Activated naive CD4-positive, alpha-beta T cell treated with anti-CD3 and anti-CD28 coated beads for 36 hours (primary cell): ENCODE measurements at regions of chr17 and their contacts with region 1.

Region 1: GRCh38 chr17:75749545-75750389 is 15.2 kb downstream of the GALK1 start:
- DNase-seq: peak; percentile 92
- H3K4me3 Mint-ChIP-seq: no peak overlapping the region
- H3K27ac Mint-ChIP-seq: peak overlapping the region; percentile 18
- H3K4me1 Mint-ChIP-seq: peaks cover 14% of the 10 kb centered on the region
- H3K27me3 Mint-ChIP-seq: no peaks in the 10 kb centered on the region

Region 2: GRCh38 chr17:75515496-75516254 is 234.1 kb before region 1 on chr17 and contains the start of gene CASKIN2:
- CTCF ChIA-PET with region 1: no interaction called
- intact Hi-C with region 1: loop called (anchors 5 kb)
- DNase-seq: peak; percentile 90
- H3K4me3 Mint-ChIP-seq: peak within 1 kb of the TSS; percentile 62
- H3K27ac Mint-ChIP-seq: no peak within 1 kb of the TSS
- H3K4me1 Mint-ChIP-seq: peaks cover 23% of the 10 kb centered on the region
- H3K27me3 Mint-ChIP-seq: no peaks in the 10 kb centered on the region
- total RNA-seq, gene CASKIN2: 1.0 to 1.1 TPM

Region 3: GRCh38 chr17:75632863-75633485 is 116.8 kb before region 1 on chr17 and contains the start of gene SMIM5:
- CTCF ChIA-PET with region 1: interaction called, 166 read pairs
- intact Hi-C with region 1: loop called (anchors 1 kb)
- DNase-seq: peak; percentile 88
- H3K4me3 Mint-ChIP-seq: no peak within 1 kb of the TSS
- H3K27ac Mint-ChIP-seq: no peak within 1 kb of the TSS
- H3K4me1 Mint-ChIP-seq: peaks cover 10% of the 10 kb centered on the region
- H3K27me3 Mint-ChIP-seq: no peaks in the 10 kb centered on the region
- total RNA-seq, gene SMIM5: not detected

Region 4: DNA sequence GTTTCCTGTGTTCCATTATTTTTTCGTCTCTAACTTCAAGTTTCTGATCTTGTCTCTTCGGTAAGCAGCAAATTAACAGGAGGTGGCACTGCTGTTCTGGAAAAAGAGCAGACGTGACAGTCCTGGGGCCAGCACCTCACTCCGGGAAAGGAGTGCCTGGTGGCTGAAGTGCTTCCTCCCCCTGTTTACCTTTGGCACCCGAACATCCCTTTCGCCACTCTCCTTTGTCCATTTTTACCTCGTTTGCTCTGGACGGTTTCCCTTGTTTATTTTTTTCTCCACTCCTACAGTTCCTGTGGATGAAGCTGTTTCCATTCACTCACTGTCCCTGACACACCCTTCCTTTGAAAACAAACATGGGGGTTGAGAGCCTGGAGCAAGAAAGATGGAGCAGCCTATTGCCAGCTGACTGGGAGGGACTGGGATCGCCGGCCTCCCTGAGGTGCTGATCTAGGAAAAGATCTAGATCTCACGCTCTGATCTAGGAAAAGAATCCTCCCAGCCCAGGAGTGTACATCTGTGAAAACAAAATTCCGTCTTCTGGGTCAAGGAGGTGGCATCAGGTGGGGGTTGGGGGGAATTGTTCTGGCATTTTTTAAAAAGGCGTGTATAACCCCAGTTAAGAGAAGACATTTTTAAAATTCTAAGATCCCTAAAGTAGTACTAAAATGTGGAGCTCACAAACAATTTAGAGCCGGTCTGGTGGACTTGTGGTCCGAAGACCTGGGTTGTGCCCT is 69.9 kb before region 1 on chr17:
- CTCF ChIA-PET with region 1: interaction called, 127 read pairs
- intact Hi-C with region 1: loop called (anchors 1 kb)
- DNase-seq: no peak
- H3K4me3 Mint-ChIP-seq: no peak overlapping the region
- H3K27ac Mint-ChIP-seq: no peak overlapping the region
- H3K4me1 Mint-ChIP-seq: peaks cover 25% of the 10 kb centered on the region
- H3K27me3 Mint-ChIP-seq: no peaks in the 10 kb centered on the region

Region 5: GRCh38 chr17:75731716-75732498 is 17.9 kb before region 1 on chr17:
- CTCF ChIA-PET with region 1: interaction called, 12 read pairs
- intact Hi-C with region 1: no loop called
- DNase-seq: no peak
- H3K4me3 Mint-ChIP-seq: no peak overlapping the region
- H3K27ac Mint-ChIP-seq: no peak overlapping the region
- H3K4me1 Mint-ChIP-seq: no peaks in the 10 kb centered on the region
- H3K27me3 Mint-ChIP-seq: no peaks in the 10 kb centered on the region

Region 6: DNA sequence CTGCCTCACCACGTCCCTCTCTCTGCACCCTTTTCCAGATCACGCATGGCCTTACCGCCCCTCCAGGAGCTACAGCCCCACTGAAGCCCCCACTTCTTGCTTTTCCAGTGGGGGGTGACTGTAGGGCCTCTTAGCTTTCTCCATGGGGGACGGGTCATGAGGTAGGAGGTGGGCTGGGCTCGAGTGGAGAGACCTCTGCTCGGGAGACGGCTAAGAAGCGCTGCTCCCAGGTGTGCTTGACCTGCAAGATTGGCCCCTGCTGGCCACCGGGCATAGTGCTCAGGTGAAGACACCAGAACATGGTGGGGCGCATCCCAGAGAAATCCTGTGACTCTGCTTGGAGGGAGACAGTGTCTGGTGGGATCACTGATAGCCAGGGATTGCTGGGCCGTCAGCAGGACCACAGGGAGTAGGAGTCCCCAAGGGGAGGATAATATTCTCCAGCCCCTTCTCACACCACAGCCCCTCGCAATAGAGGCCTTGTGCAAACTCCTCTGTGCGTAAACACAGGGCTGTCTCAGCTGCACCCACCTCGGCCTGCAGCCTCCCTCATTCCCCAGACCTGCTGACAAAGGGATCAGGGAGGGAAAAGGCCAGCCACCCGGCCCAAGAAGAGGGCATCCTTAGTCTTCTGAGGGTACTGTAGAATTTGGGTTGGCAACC is 24.2 kb after region 1 on chr17:
- CTCF ChIA-PET with region 1: interaction called, 12 read pairs
- intact Hi-C with region 1: no loop called
- DNase-seq: no peak
- H3K4me3 Mint-ChIP-seq: no peak overlapping the region
- H3K27ac Mint-ChIP-seq: no peak overlapping the region
- H3K4me1 Mint-ChIP-seq: peaks cover 28% of the 10 kb centered on the region
- H3K27me3 Mint-ChIP-seq: no peaks in the 10 kb centered on the region

Region 7: GRCh38 chr17:75861927-75862317 is 112.2 kb after region 1 on chr17:
- CTCF ChIA-PET with region 1: interaction called, 11 read pairs
- intact Hi-C with region 1: no loop called
- DNase-seq: no peak
- H3K4me3 Mint-ChIP-seq: no peak overlapping the region
- H3K27ac Mint-ChIP-seq: no peak overlapping the region
- H3K4me1 Mint-ChIP-seq: peaks cover 33% of the 10 kb centered on the region
- H3K27me3 Mint-ChIP-seq: no peaks in the 10 kb centered on the region